ENCODE measurements at regions of chr2 and their contacts with region 1.

Region 1: GRCh38 chr2:231227309-231228162 is 29.1 kb downstream of the ARMC9 start:
- DNase-seq: peak; percentile 73
- H3K4me3 ChIP-seq: no peak overlapping the region
- H3K27ac ChIP-seq: peak overlapping the region; percentile 22 to 49
- H3K4me1 ChIP-seq: peaks cover 0 to 26% (median 10%) of the 10 kb centered on the region in 4 donors
- H3K27me3 ChIP-seq: no peaks in the 10 kb centered on the region
- CTCF ChIP-seq: peak; percentile 85

Region 2: DNA sequence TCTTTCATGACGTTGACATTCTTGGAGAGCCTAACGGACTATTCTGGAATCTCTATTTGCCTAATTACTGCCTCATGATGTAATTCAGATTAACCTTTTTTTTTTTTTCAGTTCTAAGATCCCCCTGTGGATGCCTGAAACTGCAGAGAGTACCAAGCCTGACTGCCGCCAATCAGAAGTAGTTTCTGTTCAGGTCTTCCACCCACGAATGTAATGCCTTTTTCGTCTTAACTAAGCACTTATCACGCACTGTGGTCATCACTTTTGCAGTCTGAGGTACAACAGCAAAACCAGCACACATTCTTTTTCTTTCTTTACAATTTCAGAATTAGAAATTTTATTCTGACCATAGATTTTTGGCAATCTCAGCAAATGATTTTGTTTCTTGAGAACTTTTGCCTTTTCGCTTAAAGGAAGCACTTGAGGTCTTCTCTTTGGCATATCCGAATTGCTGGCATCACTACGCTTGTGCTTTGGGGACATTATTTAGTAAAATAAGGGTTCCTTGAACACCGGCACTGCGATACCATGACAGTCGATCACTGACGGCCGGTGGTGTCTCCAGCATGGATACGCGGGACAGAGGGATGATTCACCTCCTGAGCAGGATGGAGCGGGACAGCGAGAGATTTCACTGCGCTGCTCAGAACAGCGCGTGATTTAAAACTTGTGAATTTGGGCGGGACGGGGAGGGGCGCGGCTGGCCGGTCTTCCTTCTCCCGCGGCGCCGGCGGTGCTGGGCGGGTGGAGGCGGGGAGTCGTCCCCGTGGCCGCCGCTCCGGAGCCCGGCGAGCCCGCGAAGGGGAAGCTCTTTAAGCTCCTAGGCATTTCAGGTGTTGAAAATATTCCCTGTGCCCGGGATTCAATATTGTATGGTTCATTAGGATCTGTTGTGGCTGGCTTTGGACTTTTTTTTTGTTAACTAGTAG is 270.4 kb before region 1 on chr2:
- intact Hi-C with region 1: no loop called
- DNase-seq: peak in 1 of 2 donors; percentile 39
- H3K4me3 ChIP-seq: peak overlapping the region; percentile 22 to 46
- H3K27ac ChIP-seq: no peak overlapping the region
- H3K4me1 ChIP-seq: peaks cover 0 to 8% (median 2%) of the 10 kb centered on the region in 4 donors
- H3K27me3 ChIP-seq: peaks cover 3 to 29% of the 10 kb centered on the region in 2 donors
- CTCF ChIP-seq: no peak

Region 3: DNA sequence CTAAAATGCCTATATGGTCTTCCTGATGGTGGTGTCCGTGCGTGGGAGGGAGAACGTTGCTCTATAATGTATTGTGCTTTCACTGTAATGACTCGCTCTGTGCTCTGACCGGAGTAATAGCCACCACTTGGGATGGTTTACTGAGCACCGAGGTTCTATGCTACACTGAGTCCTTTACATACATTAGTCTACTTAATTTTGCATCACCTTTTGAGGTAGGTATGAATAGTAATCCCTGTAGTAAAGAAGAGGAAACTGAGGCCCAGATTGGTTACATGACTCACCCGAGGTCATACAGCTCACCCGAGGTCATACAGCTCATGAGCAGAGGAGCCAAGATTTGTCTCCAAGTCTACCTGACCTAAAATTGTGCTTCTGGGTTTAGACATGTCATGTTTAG is 50.4 kb after region 1 on chr2:
- intact Hi-C with region 1: loop called (anchors 2 kb)
- DNase-seq: no peak
- H3K4me3 ChIP-seq: no peak overlapping the region
- H3K27ac ChIP-seq: no peak overlapping the region
- H3K4me1 ChIP-seq: no peaks in the 10 kb centered on the region
- H3K27me3 ChIP-seq: no peaks in the 10 kb centered on the region
- CTCF ChIP-seq: no peak

Region 4: GRCh38 chr2:232647261-232647660 is 1419.7 kb after region 1 on chr2:
- intact Hi-C with region 1: no loop called
- DNase-seq: peak in 1 of 2 donors; percentile 72
- H3K4me3 ChIP-seq: no peak overlapping the region
- H3K27ac ChIP-seq: peak overlapping the region; percentile 34 to 58
- H3K4me1 ChIP-seq: peaks cover 0 to 98% (median 43%) of the 10 kb centered on the region in 4 donors
- H3K27me3 ChIP-seq: no peaks in the 10 kb centered on the region
- CTCF ChIP-seq: no peak

Measured in tibial artery (tissue), 4 donors.